Spleen (tissue), 13 donors: ENCODE measurements at regions of chr3 and their contacts with region 1.

Region 1: GRCh38 chr3:139329345-139329850 is 14.4 kb upstream of the MRPS22 start:
- DNase-seq: peak; percentile 97
- H3K4me3 ChIP-seq: peak overlapping the region in 4 of 8 donors; percentile 7 to 58 (median 12)
- H3K27ac ChIP-seq: no peak overlapping the region
- H3K4me1 ChIP-seq: peaks cover 6 to 12% (median 9%) of the 10 kb centered on the region in 6 donors
- H3K27me3 ChIP-seq: peaks cover 0 to 32% (median 13%) of the 10 kb centered on the region in 7 donors
- CTCF ChIP-seq: peak; percentile 86 to 98 (median 94)
- POLR2A ChIP-seq: no peak

Region 2: DNA sequence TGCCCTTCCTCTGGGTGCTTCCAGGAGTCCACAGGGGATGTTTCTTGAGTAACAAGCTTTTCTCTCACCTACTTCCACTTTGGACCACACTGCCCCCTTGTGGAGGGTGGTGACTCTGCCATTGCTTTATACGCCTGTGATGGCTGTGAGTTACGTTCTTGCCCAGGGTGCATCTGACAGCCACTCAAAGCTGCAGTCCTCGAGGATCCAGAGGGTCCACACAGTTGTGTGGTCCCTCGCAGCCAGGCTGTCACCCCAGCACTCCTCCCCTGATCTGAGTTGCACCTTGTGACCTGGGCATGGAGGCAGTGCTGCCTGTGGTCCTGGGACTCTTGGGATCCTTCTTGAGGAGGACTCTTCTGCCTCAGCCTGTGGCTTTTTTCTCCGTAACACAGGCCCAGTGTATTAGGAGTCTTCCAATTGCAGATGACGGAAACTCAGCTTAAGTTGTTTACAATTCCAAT is 405.8 kb before region 1 on chr3:
- intact Hi-C with region 1: loop called (anchors 10 kb)
- DNase-seq: peak; percentile 91
- H3K4me3 ChIP-seq: no peak overlapping the region
- H3K27ac ChIP-seq: no peak overlapping the region
- H3K4me1 ChIP-seq: peaks cover 0 to 6% (median 4%) of the 10 kb centered on the region in 6 donors
- H3K27me3 ChIP-seq: peaks cover 0 to 33% (median 3%) of the 10 kb centered on the region in 7 donors
- CTCF ChIP-seq: peak; percentile 81 to 92 (median 89)
- POLR2A ChIP-seq: no peak

Region 3: GRCh38 chr3:139111392-139112229 is 217.8 kb before region 1 on chr3:
- intact Hi-C with region 1: loop called (anchors 5 kb)
- DNase-seq: no peak
- H3K4me3 ChIP-seq: no peak overlapping the region
- H3K27ac ChIP-seq: no peak overlapping the region
- H3K4me1 ChIP-seq: peaks cover 0 to 7% (median 2%) of the 10 kb centered on the region in 6 donors
- H3K27me3 ChIP-seq: peaks cover 0 to 15% (median 0%) of the 10 kb centered on the region in 7 donors
- CTCF ChIP-seq: peak in 10 of 11 experiments; percentile 16 to 74 (median 62)
- POLR2A ChIP-seq: no peak

Region 4: GRCh38 chr3:139378587-139379241 is 49.3 kb after region 1 on chr3:
- intact Hi-C with region 1: no loop called
- DNase-seq: no peak
- H3K4me3 ChIP-seq: no peak overlapping the region
- H3K27ac ChIP-seq: no peak overlapping the region
- H3K4me1 ChIP-seq: peaks cover 0 to 33% (median 3%) of the 10 kb centered on the region in 6 donors
- H3K27me3 ChIP-seq: no peaks in the 10 kb centered on the region
- CTCF ChIP-seq: no peak
- POLR2A ChIP-seq: no peak